Posterior vena cava (tissue), 2 donors: ENCODE measurements at regions of chr9 and their contacts with region 1.

Region 1: DNA sequence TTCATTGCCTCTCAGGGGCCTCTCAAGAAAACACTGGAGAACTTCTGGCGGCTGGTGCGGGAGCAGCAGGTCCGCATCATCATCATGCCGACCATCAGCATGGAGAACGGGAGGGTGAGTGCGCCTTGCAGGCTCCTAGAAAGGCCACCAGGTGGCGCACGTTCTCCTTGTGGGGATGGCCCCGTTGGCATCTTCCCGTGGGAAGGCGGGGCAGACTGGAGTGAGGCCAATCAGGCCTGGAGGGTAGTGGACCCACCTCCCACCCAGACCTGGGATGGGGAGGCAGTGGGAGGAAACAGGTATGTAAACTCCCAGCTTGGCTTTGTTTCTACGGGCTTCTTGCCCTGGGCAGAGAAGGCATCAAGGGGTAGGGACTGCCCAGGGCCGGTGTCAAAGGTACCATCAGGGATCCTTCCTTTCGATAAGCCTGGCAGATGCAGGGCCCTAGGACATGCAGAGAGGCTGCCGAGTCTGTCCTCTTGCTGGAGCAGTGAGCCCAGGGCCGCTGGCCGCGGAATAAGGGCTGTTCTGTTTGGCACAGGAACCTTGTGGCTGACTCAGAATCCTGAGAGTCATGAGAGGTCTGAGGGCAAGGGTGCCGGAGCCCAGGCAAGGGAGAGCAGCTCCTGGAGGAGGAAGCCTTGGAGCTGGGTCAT is 18.9 kb upstream of the SPTLC1 start:
- DNase-seq: peak; percentile 94

Region 2: DNA sequence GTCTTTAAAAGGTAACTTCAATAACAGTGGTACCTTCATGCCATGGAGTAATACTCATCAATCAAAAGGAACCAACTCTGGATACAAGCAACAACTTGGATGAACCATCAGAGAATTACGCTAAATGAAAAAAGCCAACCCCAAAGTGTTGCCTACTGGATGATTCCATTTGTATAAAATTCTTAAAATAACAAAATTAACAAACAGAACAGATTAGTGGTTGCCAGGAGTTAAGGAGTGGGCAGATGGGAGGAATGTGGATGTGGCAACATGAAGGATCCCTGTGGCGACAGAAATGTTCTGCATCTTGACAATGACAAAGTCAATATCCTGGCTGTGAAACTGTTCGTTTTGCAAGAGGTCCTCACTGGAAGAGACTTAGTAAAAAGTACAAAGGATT is 69.4 kb before region 1 on chr9:
- intact Hi-C with region 1: no loop called
- DNase-seq: no peak

Region 3: DNA sequence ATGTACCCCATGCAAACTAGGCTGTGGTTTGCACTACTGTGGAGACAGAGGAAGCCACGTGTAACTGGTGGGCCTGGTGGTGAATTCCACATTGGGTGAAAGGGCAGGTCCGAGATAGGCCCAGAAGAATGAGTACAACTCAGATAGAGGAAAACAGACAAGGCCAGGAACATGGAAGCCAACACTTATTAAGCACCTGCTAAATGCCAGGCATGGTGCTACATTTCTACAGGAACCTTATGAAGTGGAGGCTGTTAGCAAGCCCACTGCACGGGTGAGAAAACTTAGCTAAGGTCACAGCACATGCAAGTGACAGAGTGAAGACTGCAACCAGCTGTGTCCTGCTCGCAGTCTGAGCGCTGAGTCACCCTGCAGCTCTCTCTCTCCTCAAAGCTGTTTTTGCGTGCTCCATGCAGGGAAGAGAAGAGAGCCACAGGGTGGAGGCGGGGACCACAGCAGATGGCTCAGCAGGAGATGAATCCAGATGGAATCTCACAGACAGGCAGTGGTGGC is 46.6 kb after region 1 on chr9:
- intact Hi-C with region 1: loop called in 1 of 2 experiments (anchors 1 kb)
- DNase-seq: no peak

Region 4: GRCh38 chr9:92242260-92243136 is 108.4 kb after region 1 on chr9:
- intact Hi-C with region 1: loop called in 1 of 2 experiments (anchors 10 kb)
- DNase-seq: no peak

Region 5: DNA sequence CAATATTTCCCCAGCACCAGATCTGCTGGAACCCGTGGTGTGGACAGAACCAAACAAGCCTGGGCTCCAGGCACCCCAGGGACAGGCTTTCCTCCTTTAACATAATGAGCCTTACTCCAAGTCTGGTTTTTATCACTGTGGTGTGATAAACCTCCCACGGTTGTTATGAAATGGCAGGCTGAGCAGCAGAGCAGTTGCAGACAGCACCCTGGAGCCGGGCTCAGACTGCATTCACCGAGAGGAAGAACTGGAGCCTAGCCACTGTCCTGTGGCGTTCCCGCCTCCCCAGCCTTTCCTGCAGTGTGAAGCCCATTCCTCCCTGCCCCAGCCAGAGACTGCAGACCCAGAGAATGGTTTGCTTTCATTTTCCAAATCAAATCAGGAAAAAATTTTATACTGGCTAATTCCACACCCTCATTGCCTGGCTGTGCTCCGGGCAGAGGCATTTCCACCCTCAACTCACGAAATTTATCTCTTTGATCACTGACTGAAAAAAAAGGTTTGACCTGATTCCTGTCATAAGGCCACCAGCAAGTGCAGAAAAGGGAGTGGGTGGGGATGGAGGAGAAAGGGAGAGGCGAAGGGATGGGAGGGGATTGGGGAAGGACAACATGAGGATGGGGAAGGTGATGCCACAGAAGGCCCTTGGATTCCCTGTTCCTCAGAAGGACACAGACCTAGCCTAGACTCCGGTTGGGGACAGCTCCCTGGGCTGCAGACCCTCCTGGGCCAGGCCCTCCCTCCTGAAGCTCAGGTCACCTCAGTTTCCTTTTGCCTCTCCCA is 517.0 kb after region 1 on chr9:
- intact Hi-C with region 1: loop called in 1 of 2 experiments (anchors 10 kb)
- DNase-seq: peak; percentile 82